Activated CD4-positive, alpha-beta memory T cell treated with anti-CD3 and anti-CD28 coated beads for 36 hours (primary cell): ENCODE measurements at regions of chr12 and their contacts with region 1.

Region 1: DNA sequence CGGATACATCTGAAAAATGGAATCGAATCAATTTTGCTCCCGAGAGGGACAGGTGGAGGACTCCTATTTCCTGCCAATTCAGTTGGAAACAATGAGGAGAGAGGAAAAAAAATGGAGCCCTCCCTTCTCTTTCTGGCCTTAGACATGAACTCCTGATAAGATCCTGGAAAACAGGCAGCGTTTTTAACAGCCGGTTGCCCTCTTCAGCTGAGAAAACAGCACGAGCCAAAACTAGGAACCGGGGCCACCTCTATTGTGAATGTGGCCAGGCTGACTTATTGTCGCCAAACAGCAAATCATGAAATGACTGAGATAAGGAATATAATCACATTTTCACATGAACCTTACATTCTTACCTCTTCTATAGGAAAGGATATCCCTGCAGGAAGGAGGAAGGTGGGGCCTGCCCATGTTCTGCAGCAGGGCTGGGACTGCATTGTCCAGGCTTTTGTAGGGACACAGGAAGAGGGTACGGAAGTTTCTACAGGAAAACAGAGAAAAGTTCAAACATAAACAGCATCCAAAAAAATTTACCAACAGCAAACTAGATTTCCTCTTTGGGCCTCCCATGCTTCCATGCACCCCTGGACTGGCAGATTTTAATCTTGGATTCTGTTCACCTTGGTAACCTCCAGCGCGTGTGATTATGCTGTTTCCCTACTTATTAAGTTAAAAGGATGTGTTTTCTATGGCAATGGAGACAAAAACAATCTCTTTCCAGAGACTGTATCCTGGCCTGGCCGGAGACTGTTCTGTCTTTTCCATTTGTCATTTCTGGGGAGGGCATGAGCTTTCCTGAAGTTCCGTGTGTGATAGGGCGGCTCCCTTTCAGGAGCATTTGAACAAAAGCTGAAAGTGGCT is 29.0 kb upstream of the ELK3 start:
- DNase-seq: no peak
- H3K4me3 Mint-ChIP-seq: no peak overlapping the region
- H3K27ac Mint-ChIP-seq: no peak overlapping the region
- H3K4me1 Mint-ChIP-seq: no peaks in the 10 kb centered on the region
- H3K27me3 Mint-ChIP-seq: no peaks in the 10 kb centered on the region

Region 2: DNA sequence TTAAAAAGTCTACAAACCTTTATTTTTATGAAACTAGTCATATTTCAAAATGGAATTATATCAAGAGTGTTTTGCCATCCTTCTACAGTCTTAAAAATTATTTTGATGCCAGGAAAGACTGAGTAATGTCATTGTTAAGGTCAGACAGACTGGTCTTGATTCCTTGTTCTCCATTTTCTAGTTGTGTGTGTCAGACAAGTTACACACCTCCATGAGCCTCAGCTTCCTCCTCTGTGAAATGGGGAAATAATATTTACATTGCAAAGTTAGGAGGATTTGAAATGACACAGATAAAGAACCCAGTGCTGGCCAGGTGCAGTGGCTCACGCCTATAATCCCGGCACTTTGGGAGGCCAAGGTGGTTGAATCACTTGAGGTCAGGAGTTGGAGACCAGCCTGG is 18.4 kb before region 1 on chr12:
- CTCF ChIA-PET with region 1: no interaction called
- POLR2A ChIA-PET with region 1: no interaction called
- intact Hi-C with region 1: loop called (anchors 2 kb)
- DNase-seq: no peak
- H3K4me3 Mint-ChIP-seq: no peak overlapping the region
- H3K27ac Mint-ChIP-seq: no peak overlapping the region
- H3K4me1 Mint-ChIP-seq: peaks cover 19% of the 10 kb centered on the region
- H3K27me3 Mint-ChIP-seq: no peaks in the 10 kb centered on the region